HCT116 (cell line): ENCODE measurements at regions of chr18 and their contacts with region 1.

Region 1: GRCh38 chr18:13159579-13159978 is 59.0 kb upstream of the LDLRAD4 start:
- DNase-seq: peak; percentile 44
- ATAC-seq: peak; percentile 76
- H3K4me3 ChIP-seq: no peak overlapping the region
- H3K27ac ChIP-seq: no peak overlapping the region
- H3K4me1 ChIP-seq: 0 out of 4 replicates have a peak, but pooled peaks cover 0 to 2% of the 10 kb centered on the region in 2 experiments
- H3K27me3 ChIP-seq: no peaks in the 10 kb centered on the region
- CTCF ChIP-seq: peak; percentile 61 to 81 (median 77); a peak in 5 of 6 replicates
- POLR2A ChIP-seq: no peak
- RAD21 ChIP-seq: peak; percentile 68

Region 2: GRCh38 chr18:12455496-12455895 is 704.1 kb before region 1 on chr18:
- CTCF ChIA-PET with region 1: no interaction called
- POLR2A ChIA-PET with region 1: no interaction called
- RAD21 ChIA-PET with region 1: no interaction called
- intact Hi-C with region 1: no loop called
- DNase-seq: no peak
- ATAC-seq: no peak
- H3K4me3 ChIP-seq: no peak overlapping the region
- H3K27ac ChIP-seq: no peak overlapping the region
- H3K4me1 ChIP-seq: no peaks in the 10 kb centered on the region
- H3K27me3 ChIP-seq: no peaks in the 10 kb centered on the region
- CTCF ChIP-seq: no peak
- POLR2A ChIP-seq: no peak
- RAD21 ChIP-seq: no peak

Region 3: DNA sequence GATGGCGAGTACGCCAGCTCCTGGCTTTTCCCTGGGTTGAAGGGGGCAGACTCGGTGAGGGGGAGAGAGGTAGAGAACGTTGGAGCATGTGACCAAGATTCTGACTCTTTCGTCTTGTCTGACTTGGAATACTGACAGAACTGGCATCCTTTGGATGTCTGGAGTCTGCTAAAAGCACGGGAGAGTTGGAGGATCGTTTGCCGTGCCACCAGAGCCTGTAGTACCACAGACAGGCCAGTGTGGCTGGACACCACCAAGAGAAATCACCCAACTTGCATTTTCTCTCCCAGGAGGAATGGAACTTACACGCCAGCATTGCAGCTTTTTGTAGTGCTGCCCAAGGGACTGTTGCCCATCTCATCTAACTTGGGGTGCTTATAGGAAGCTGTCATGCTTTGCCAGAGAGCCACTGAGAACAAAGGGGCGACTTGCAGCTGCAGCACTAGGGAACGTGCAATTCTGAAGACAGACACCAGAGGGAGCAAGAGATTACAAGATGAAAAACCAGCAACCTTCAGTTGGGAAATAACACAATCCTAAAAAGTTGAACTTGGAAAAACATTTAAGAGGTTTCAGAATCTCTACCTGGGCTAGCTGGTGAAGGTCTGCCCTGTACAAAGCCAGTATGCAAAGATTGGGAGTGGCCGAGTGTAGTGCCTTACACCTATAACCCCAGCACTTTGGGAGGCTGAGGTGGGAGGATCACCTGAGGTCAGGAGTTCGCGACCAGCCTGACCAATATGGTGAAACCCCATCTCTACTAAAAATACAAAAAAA is 432.6 kb before region 1 on chr18:
- CTCF ChIA-PET with region 1: interaction called, 9 read pairs
- POLR2A ChIA-PET with region 1: no interaction called
- RAD21 ChIA-PET with region 1: no interaction called
- intact Hi-C with region 1: loop called (anchors 5 kb)
- DNase-seq: peak; percentile 49
- ATAC-seq: peak; percentile 63
- H3K4me3 ChIP-seq: no peak overlapping the region
- H3K27ac ChIP-seq: no peak overlapping the region
- H3K4me1 ChIP-seq: peaks cover 0 to 8% of the 10 kb centered on the region in 2 experiments; a peak in 3 of 4 replicates
- H3K27me3 ChIP-seq: no peaks in the 10 kb centered on the region
- CTCF ChIP-seq: peak; percentile 71 to 92 (median 86); a peak in 5 of 6 replicates
- POLR2A ChIP-seq: no peak
- RAD21 ChIP-seq: peak; percentile 79

Region 4: GRCh38 chr18:12744103-12744502 is 415.5 kb before region 1 on chr18:
- CTCF ChIA-PET with region 1: interaction called, 4 read pairs
- POLR2A ChIA-PET with region 1: no interaction called
- RAD21 ChIA-PET with region 1: no interaction called
- intact Hi-C with region 1: loop called (anchors 5 kb)
- DNase-seq: peak; percentile 42
- ATAC-seq: peak; percentile 94
- H3K4me3 ChIP-seq: no peak overlapping the region
- H3K27ac ChIP-seq: no peak overlapping the region
- H3K4me1 ChIP-seq: peaks cover 4 to 5% of the 10 kb centered on the region in 2 experiments; a peak in 2 of 4 replicates
- H3K27me3 ChIP-seq: no peaks in the 10 kb centered on the region
- CTCF ChIP-seq: peak; percentile 36 to 71 (median 66)
- POLR2A ChIP-seq: no peak
- RAD21 ChIP-seq: peak; percentile 79

Region 5: GRCh38 chr18:13003466-13003896 is 156.1 kb before region 1 on chr18:
- CTCF ChIA-PET with region 1: no interaction called
- POLR2A ChIA-PET with region 1: no interaction called
- RAD21 ChIA-PET with region 1: no interaction called
- intact Hi-C with region 1: loop called (anchors 1 kb)
- DNase-seq: peak; percentile 78
- ATAC-seq: peak; percentile 100
- H3K4me3 ChIP-seq: no peak overlapping the region
- H3K27ac ChIP-seq: no peak overlapping the region
- H3K4me1 ChIP-seq: no peaks in the 10 kb centered on the region
- H3K27me3 ChIP-seq: no peaks in the 10 kb centered on the region
- CTCF ChIP-seq: peak; percentile 41 to 63 (median 60)
- POLR2A ChIP-seq: no peak
- RAD21 ChIP-seq: peak; percentile 51

Region 6: DNA sequence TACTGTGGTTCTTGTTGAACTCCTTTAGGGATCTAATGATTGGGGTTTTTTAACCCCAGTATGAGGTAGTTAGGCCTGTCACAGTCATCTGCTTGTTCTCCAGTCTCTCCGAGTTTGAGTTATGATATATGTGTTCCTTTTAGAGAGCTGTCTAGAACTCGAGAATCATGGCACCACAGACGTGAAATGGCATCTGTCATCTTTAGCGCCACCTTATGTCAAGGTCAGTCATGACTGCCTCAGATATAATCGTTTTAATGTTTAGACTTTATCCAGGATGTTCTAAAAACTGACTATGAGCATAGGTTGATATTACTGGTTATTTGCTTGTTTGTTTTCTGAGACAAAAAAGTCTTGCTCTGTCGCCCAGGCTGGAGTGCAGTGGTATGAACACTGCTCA is 56.2 kb before region 1 on chr18:
- CTCF ChIA-PET with region 1: no interaction called
- POLR2A ChIA-PET with region 1: no interaction called
- RAD21 ChIA-PET with region 1: no interaction called
- intact Hi-C with region 1: no loop called
- DNase-seq: peak; percentile 4
- ATAC-seq: peak; percentile 44; the same call in 1 of the 2 replicates
- H3K4me3 ChIP-seq: no peak overlapping the region
- H3K27ac ChIP-seq: no peak overlapping the region
- H3K4me1 ChIP-seq: no peaks in the 10 kb centered on the region
- H3K27me3 ChIP-seq: no peaks in the 10 kb centered on the region
- CTCF ChIP-seq: peak; percentile 10 to 59 (median 28); a peak in 3 of 6 replicates
- POLR2A ChIP-seq: no peak
- RAD21 ChIP-seq: no peak